ENCODE measurements at regions of chr5 and their contacts with region 1.

Region 1: DNA sequence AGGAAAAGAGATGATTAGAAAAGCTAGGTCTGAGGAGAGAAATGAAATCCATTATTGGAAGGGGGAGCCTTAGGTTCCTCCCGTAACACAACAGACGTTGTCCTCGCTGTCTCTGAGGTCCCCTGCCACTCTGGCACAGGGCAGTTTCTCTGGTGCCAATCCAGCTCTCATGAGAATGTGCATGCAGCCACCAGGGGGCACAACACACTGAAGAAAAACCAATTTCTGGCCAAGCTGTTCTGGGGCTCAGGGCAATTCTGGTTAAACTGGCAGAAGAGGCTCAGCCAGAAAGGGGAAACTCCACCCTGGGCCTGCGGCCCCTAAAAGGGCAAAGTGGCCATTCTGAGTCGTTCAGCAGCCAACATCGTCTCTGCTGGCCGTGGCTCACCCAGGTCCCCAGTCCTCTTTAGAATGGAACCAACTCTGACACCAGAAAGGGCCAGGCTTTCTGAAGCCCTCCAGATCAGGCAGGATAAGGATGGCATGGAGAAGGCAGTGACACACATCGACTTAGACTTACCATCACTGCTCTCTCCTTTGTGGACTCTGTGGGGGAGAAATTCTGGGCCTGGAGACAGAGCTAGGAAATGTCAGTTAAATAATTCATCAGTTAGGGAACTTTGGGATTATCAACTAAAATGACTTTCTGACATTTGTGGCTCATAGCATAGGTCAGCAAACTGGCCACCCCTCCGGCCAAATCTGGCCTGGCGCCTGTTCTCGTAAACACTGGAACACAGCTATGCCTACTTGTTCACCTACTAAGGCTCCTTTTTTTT is 58.5 kb upstream of the GOLPH3 start:
- DNase-seq: peak; percentile 74
- ATAC-seq: peak; percentile 87
- H3K4me3 ChIP-seq: no peak overlapping the region
- H3K27ac ChIP-seq: no peak overlapping the region
- H3K4me1 ChIP-seq: peaks cover 7% of the 10 kb centered on the region; the same call in 1 of the 2 replicates
- H3K27me3 ChIP-seq: no peaks in the 10 kb centered on the region
- CTCF ChIP-seq: peak; percentile 92

Region 2: DNA sequence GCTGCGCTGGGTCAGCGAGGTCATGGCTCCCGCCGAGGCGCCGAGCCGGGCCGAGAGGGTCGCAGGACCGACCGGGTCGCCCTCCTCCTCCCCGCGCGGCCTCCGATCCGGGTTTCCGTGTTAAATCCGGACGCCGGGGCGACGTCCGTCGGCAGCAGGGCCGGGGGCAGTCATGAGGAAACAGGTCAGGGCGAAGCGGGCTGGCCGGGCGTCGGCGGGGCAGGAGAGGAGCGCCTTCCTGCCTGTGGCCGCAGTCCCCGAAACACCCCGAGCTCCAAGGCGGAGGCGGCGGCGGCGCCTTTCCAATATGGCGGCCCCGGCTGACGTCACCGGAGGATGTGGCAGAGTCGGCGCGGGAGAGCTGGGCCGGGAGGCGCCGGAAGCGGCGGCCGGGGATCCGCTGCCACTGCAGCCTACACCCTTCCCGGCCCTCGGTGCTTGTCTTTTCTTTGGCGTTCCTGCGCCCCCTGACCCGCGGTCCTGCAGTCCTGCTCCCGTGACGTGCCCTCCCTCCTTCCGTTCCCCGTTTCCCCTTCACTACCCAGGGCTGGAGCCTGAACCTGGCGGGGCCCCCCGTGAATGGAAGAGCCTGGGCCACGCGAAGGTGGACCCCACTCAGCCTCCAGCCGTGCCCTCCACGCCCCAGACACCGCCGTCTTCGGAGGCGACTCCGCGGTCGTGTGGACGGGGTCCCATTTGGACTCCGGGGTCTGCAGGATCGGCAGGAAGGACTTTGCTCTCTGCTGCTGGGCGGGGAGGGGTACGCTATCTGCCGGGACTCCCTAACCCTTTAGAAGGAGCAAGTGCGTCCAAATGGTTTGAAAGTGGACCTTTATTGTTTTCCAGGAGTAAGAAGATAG is 58.4 kb before region 1 on chr5 and contains the start of gene GOLPH3:
- CTCF ChIA-PET with region 1: no interaction called
- POLR2A ChIA-PET with region 1: no interaction called
- intact Hi-C with region 1: loop called (anchors 2 kb)
- DNase-seq: peak; percentile 92
- ATAC-seq: peak; percentile 79
- H3K4me3 ChIP-seq: peak within 1 kb of the TSS; percentile 74
- H3K27ac ChIP-seq: peak within 1 kb of the TSS; percentile 81
- H3K4me1 ChIP-seq: peaks cover 25% of the 10 kb centered on the region
- H3K27me3 ChIP-seq: no peaks in the 10 kb centered on the region
- CTCF ChIP-seq: no peak
- total RNA-seq, gene GOLPH3: 46.2 and 55.5 TPM in 2 replicates

Region 3: GRCh38 chr5:32201140-32201753 is 31.4 kb before region 1 on chr5:
- CTCF ChIA-PET with region 1: no interaction called
- POLR2A ChIA-PET with region 1: interaction called, 20 read pairs
- intact Hi-C with region 1: no loop called
- DNase-seq: no peak
- ATAC-seq: no peak
- H3K4me3 ChIP-seq: no peak overlapping the region
- H3K27ac ChIP-seq: peak overlapping the region; percentile 16
- H3K4me1 ChIP-seq: peaks cover 14% of the 10 kb centered on the region
- H3K27me3 ChIP-seq: no peaks in the 10 kb centered on the region
- CTCF ChIP-seq: no peak

Region 4: GRCh38 chr5:32290922-32291321 is 58.3 kb after region 1 on chr5:
- CTCF ChIA-PET with region 1: no interaction called
- POLR2A ChIA-PET with region 1: no interaction called
- intact Hi-C with region 1: no loop called
- DNase-seq: no peak
- ATAC-seq: no peak
- H3K4me3 ChIP-seq: no peak overlapping the region
- H3K27ac ChIP-seq: no peak overlapping the region
- H3K4me1 ChIP-seq: no peaks in the 10 kb centered on the region
- H3K27me3 ChIP-seq: no peaks in the 10 kb centered on the region
- CTCF ChIP-seq: no peak

Region 5: DNA sequence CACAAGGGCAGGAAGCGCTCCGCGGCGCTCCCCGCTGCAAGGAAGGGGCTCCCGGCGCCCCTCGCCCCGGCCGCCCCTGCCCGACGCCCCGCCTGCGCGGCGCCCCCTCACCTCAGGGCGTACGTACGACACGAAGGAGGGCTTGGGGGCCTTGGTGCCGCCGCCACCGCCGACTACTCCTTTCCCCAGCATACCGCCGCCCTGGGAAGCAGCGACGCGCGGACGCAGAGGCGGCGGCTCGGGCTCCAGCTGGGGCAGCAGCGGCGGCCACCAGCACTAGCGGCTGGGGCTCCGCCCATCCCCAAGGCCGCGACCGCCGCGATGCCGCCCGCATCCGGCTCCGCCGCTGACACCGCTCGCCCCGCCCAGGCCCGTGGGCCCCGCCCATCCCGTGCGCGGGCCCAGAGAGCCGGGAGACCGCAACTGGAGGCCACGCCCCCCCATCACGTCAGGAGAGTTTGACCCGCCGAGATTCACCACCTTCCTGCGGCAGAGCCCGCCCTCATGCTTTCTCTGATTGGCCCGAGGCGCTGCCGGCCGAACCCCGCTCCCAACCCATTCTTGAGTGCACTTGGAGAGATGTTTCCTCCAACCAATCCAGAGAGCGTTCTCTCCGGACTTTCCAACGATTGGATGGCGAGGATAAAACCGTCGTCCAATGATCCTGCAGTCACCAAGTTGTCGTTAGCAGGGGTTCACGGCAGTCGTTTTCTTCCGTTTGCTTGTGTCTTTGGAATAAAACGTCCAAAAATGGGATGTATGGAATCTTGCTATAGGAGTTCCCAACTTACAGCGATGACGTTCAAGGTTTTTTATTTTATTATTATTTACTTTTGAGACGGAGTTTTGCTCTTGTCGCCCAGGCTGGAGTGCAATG is 80.3 kb after region 1 on chr5 and contains the start of gene MTMR12:
- CTCF ChIA-PET with region 1: no interaction called
- POLR2A ChIA-PET with region 1: no interaction called
- intact Hi-C with region 1: loop called (anchors 1 kb)
- DNase-seq: peak; percentile 99
- ATAC-seq: peak; percentile 94
- H3K4me3 ChIP-seq: peak within 1 kb of the TSS; percentile 76
- H3K27ac ChIP-seq: peak within 1 kb of the TSS; percentile 31; the same call in 1 of the 2 replicates
- H3K4me1 ChIP-seq: peaks cover 9% of the 10 kb centered on the region; the same call in 1 of the 2 replicates
- H3K27me3 ChIP-seq: no peaks in the 10 kb centered on the region
- CTCF ChIP-seq: no peak
- total RNA-seq, gene MTMR12: 14.5 and 16.0 TPM in 2 replicates

Region 6: DNA sequence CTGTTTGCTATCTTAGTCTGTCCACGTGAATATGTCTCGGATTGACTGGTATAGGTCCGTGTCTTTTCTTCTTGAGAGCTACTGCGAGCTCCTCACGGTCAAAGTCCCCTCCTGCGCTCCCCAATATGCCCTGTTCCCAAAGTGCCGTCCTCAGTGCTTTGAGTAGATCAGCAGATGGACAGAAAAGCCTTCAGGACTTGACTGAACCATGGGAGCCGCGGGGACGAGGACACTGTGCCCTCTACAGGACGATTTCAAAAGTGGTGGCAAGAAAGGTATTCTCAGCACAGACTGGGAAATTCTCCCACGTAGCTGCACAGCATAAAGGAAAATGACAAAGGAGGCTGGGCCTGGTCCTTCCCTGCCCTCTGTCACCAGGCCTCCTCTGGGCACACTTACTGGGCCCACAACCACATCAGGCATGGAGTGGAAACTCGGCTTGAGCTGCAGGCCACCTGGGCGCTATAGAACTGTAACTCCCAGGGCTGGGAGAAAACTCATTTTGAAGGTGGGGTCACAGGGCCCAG is 96.7 kb after region 1 on chr5:
- CTCF ChIA-PET with region 1: interaction called, 8 read pairs
- POLR2A ChIA-PET with region 1: no interaction called
- intact Hi-C with region 1: loop called (anchors 1 kb)
- DNase-seq: peak; percentile 64
- ATAC-seq: peak; percentile 94
- H3K4me3 ChIP-seq: no peak overlapping the region
- H3K27ac ChIP-seq: no peak overlapping the region
- H3K4me1 ChIP-seq: 0 out of 2 replicates have a peak, but pooled peaks cover 7% of the 10 kb centered on the region
- H3K27me3 ChIP-seq: no peaks in the 10 kb centered on the region
- CTCF ChIP-seq: peak; percentile 85

Region 7: GRCh38 chr5:32613050-32613672 is 380.5 kb after region 1 on chr5:
- CTCF ChIA-PET with region 1: no interaction called
- POLR2A ChIA-PET with region 1: no interaction called
- intact Hi-C with region 1: loop called (anchors 1 kb)
- DNase-seq: peak; percentile 87
- ATAC-seq: peak; percentile 81
- H3K4me3 ChIP-seq: no peak overlapping the region
- H3K27ac ChIP-seq: no peak overlapping the region
- H3K4me1 ChIP-seq: no peaks in the 10 kb centered on the region
- H3K27me3 ChIP-seq: no peaks in the 10 kb centered on the region
- CTCF ChIP-seq: peak; percentile 92

Measured in PC-3 (cell line).